ENCODE measurements at regions of chr16 and their contacts with region 1.

Region 1: GRCh38 chr16:30747799-30748634 is at the start of gene PHKG2:
- DNase-seq: peak; percentile 99 to 100
- ATAC-seq: peak; percentile 95 to 96
- H3K4me3 ChIP-seq: peak within 1 kb of the TSS; percentile 76 to 91 (median 88)
- H3K27ac ChIP-seq: peak within 1 kb of the TSS; percentile 73 to 91 (median 79)
- H3K4me1 ChIP-seq: peaks cover 7 to 8% of the 10 kb centered on the region in 2 donors
- H3K27me3 ChIP-seq: no peaks in the 10 kb centered on the region
- CTCF ChIP-seq: no peak
- POLR2A ChIP-seq: peak; percentile 48 to 53
- total RNA-seq, gene PHKG2: 8.8 to 30.0 (median 21.6) TPM

Region 2: GRCh38 chr16:30761928-30762810 is 14.2 kb after region 1 on chr16 and contains the starts of genes CFAP119 and RNF40:
- in situ Hi-C with region 1: no loop called
- intact Hi-C with region 1: loop called (anchors 1 kb)
- DNase-seq: peak; percentile 96 to 98
- ATAC-seq: peak; percentile 98 to 99
- H3K4me3 ChIP-seq: peak within 1 kb of the TSS; percentile 77 to 96 (median 92)
- H3K27ac ChIP-seq: peak within 1 kb of the TSS; percentile 91 to 96 (median 94)
- H3K4me1 ChIP-seq: peaks cover 18 to 23% of the 10 kb centered on the region in 2 donors
- H3K27me3 ChIP-seq: no peaks in the 10 kb centered on the region
- CTCF ChIP-seq: no peak
- POLR2A ChIP-seq: peak; percentile 79 to 92
- total RNA-seq, gene CFAP119: 0.73 to 5.8 (median 1.7) TPM in 3 of 4 donors, not detected in the other
- total RNA-seq, gene RNF40: 42.8 to 90.0 (median 57.0) TPM

Region 3: GRCh38 chr16:30786936-30787612 is 39.1 kb after region 1 on chr16 and contains the start of gene ZNF629:
- in situ Hi-C with region 1: no loop called
- intact Hi-C with region 1: no loop called
- DNase-seq: peak in 1 of 2 donors; percentile 62
- ATAC-seq: peak; percentile 73 to 78
- H3K4me3 ChIP-seq: peak within 1 kb of the TSS; percentile 73 to 95 (median 87)
- H3K27ac ChIP-seq: peak within 1 kb of the TSS; percentile 80 to 95 (median 91)
- H3K4me1 ChIP-seq: peaks cover 15 to 18% of the 10 kb centered on the region in 2 donors
- H3K27me3 ChIP-seq: no peaks in the 10 kb centered on the region
- CTCF ChIP-seq: peak in 2 of 5 experiments; percentile 10 to 11
- POLR2A ChIP-seq: no peak
- total RNA-seq, gene ZNF629: 9.1 to 12.7 (median 10.3) TPM

Measured in gastrocnemius medialis (tissue), 4 donors.